ENCODE measurements at regions of chr3 and their contacts with region 1.

Region 1: GRCh38 chr3:141311496-141312353 is 56.6 kb upstream of the ZBTB38 start:
- DNase-seq: peak; percentile 100
- H3K4me3 Mint-ChIP-seq: peak overlapping the region; percentile 100
- H3K27ac Mint-ChIP-seq: peak overlapping the region; percentile 98
- H3K4me1 Mint-ChIP-seq: peaks cover 46% of the 10 kb centered on the region
- H3K27me3 Mint-ChIP-seq: no peaks in the 10 kb centered on the region

Region 2: GRCh38 chr3:141323936-141324704 is 12.4 kb after region 1 on chr3:
- CTCF ChIA-PET with region 1: interaction called, 17 read pairs
- intact Hi-C with region 1: no loop called
- DNase-seq: no peak
- H3K4me3 Mint-ChIP-seq: no peak overlapping the region
- H3K27ac Mint-ChIP-seq: no peak overlapping the region
- H3K4me1 Mint-ChIP-seq: peaks cover 36% of the 10 kb centered on the region
- H3K27me3 Mint-ChIP-seq: no peaks in the 10 kb centered on the region

Region 3: DNA sequence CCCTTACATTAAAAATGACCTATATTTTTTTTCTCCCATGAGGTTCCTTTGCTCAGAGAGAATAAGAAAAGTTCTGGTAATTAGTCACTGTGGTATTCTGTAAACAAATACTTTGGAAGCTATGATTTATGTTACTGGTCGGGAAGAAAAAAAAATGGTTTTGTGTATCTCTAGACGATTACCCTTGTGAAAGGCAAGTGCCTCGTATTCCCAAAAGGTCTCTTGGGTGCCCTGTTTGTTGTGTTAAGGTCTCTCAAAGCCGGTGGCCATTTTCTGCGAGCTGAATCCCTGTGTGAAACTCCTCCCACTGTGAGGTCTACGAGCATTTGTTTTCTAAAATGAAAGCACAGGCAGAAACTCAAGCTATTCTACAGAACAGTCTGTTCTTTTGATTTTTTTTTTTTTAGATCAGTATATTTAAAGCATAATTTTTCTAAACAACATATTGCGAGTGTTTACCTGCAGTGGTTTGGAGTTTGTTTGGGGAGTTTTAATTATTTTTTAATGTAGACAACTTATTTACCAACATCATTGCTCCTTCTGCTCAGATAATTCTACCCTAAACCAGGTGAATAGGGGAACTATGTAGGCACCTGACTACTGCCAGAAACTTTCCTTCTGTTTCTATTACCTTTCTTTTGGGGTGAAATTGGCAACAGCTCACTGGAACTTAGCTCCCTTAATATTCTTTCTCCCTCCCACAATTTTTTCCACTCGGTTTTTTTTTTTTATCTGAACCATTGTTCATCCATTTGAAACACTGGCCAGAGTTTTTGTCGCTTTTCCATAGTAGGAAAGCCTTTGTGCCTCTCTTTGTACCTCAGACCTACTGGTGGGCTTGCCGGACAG is 100.6 kb after region 1 on chr3:
- CTCF ChIA-PET with region 1: interaction called, 4 read pairs
- intact Hi-C with region 1: loop called (anchors 1 kb)
- DNase-seq: peak; percentile 73
- H3K4me3 Mint-ChIP-seq: peak overlapping the region; percentile 72
- H3K27ac Mint-ChIP-seq: peak overlapping the region; percentile 97
- H3K4me1 Mint-ChIP-seq: peaks cover 72% of the 10 kb centered on the region
- H3K27me3 Mint-ChIP-seq: no peaks in the 10 kb centered on the region

Region 4: GRCh38 chr3:141460097-141460704 is 148.5 kb after region 1 on chr3:
- CTCF ChIA-PET with region 1: interaction called, 415 read pairs
- intact Hi-C with region 1: no loop called
- DNase-seq: peak; percentile 96
- H3K4me3 Mint-ChIP-seq: no peak overlapping the region
- H3K27ac Mint-ChIP-seq: no peak overlapping the region
- H3K4me1 Mint-ChIP-seq: peaks cover 6% of the 10 kb centered on the region
- H3K27me3 Mint-ChIP-seq: no peaks in the 10 kb centered on the region

Region 5: DNA sequence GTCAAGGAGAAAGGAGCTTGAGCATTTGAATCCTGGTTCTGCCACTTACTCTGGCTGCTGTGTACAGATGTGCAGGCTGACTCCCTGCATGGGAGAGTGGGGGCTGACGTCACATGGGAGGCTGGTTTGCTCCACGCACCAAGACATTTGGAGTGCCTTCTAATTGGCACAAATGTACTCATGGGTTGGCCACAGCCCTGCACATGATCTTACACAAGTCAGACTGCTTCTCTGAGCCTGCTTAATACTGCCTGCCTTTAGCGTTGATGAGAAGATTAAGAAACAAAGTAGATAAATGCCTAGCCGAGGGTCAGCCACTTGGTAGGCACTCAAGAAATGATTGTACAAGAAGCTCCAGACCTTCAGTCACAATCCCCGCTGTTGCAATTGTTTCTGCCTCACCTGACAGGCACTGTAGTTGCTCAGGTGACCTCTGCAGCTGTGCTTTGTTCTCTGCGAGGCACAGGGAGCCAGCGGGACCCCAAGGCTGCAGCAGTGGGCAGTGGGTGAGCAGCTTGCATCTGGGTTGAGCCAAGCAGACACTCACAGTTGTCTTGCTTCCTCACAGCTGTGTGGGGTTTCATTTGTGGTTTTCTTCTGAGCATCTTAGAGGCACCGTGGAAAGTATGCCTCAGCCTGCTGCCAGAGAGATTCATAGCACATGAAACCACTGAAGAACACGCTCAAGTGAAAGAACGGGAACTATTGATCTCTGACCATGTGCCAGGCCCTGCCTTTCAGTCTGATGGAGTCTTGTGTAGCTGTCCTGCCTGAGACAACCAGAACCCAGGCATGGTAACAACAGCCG is 484.6 kb after region 1 on chr3:
- CTCF ChIA-PET with region 1: no interaction called
- intact Hi-C with region 1: loop called (anchors 5 kb)
- DNase-seq: peak; percentile 90
- H3K4me3 Mint-ChIP-seq: peak overlapping the region; percentile 74
- H3K27ac Mint-ChIP-seq: peak overlapping the region; percentile 89
- H3K4me1 Mint-ChIP-seq: peaks cover 46% of the 10 kb centered on the region
- H3K27me3 Mint-ChIP-seq: no peaks in the 10 kb centered on the region

Measured in activated naive CD4-positive, alpha-beta T cell treated with anti-CD3 and anti-CD28 coated beads for 36 hours (primary cell).